WTC11 (cell line): ENCODE measurements at regions of chr19 and their contacts with region 1.

Region 1: GRCh38 chr19:9934132-9934950 is 2.0 kb downstream of the OLFM2 start:
- DNase-seq: peak; percentile 96
- ATAC-seq: peak; percentile 71
- H3K4me3 Mint-ChIP-seq: peak overlapping the region; percentile 91
- H3K27ac Mint-ChIP-seq: peak overlapping the region; percentile 97
- H3K4me1 Mint-ChIP-seq: peaks cover 24% of the 10 kb centered on the region
- H3K27me3 Mint-ChIP-seq: no peaks in the 10 kb centered on the region
- CTCF ChIP-seq: peak; percentile 96

Region 2: GRCh38 chr19:8487137-8487851 is 1447.0 kb before region 1 on chr19:
- CTCF ChIA-PET with region 1: no interaction called
- POLR2A ChIA-PET with region 1: no interaction called
- DNase-seq: no peak
- ATAC-seq: no peak
- H3K4me3 Mint-ChIP-seq: no peak overlapping the region
- H3K27ac Mint-ChIP-seq: peak overlapping the region; percentile 73
- H3K4me1 Mint-ChIP-seq: peaks cover 5% of the 10 kb centered on the region; the same call in 1 of the 2 replicates
- H3K27me3 Mint-ChIP-seq: no peaks in the 10 kb centered on the region
- CTCF ChIP-seq: no peak

Region 3: DNA sequence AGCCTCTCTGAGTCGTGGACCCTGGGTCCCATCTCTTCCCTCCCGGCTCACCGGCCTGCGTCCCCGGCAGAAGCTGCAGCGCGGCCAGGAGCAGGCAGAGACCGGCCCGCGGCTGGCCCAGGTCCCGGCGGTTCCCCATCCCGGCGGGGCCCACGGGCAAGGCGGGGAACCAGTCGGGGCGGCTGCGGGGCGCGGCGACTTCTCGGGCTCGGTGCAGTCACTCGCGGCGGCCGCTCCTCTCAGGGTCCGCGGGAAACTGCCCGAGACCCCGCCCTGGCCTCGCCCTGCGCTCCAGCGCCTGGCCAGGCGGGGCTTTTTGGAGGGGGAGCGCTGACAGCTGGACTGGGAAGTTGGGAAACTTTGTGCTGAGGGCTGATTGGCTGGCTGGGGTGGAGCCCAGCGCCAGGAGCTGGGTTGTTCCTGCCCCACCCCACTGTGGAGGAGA is 75.9 kb after region 1 on chr19 and contains the start of gene COL5A3:
- CTCF ChIA-PET with region 1: interaction called, 12 read pairs
- POLR2A ChIA-PET with region 1: no interaction called
- DNase-seq: peak; percentile 49
- ATAC-seq: peak; percentile 76
- H3K4me3 Mint-ChIP-seq: peak within 1 kb of the TSS; percentile 61
- H3K27ac Mint-ChIP-seq: no peak within 1 kb of the TSS
- H3K4me1 Mint-ChIP-seq: peaks cover 10% of the 10 kb centered on the region
- H3K27me3 Mint-ChIP-seq: peaks cover 63% of the 10 kb centered on the region
- CTCF ChIP-seq: no peak
- total RNA-seq, gene COL5A3: 0.81 to 1.2 TPM (median 0.96 TPM) in 3 replicates

Region 4: DNA sequence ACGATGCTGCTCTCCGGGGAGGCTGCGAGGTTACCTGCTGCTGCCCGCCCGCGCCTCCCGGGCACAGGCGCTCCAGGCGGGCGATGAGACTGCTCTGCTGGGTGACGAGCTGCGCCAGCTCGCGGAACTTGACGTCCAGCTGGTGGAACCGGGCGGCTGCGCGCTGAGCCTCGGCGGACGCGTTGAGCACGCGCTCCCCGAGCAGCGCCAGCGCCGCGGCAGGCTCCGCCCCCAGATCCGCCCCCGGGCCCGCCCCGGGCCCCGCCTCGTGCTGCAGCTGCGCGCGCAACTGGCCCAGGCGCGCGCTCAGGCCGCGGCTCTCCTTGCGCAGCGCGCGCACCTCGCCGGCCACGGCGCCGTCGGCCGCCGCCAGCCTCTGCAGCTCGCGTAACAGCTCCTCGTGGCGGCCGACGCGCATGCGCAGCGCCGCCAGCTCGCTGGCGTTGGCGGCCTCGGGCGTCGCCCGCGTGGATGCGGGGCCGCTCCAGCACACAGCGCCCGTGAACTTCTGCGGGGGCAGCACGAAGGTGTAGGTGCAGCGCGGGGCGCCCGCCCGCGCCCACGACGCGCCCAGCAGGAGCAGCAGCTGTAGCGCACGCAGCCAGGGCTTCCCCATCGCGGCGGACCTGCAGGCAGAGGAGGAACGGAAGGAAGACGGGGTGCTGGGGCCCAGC is 161.7 kb after region 1 on chr19:
- CTCF ChIA-PET with region 1: interaction called, 15 read pairs
- POLR2A ChIA-PET with region 1: no interaction called
- DNase-seq: peak; percentile 87
- ATAC-seq: peak; percentile 87
- H3K4me3 Mint-ChIP-seq: peak overlapping the region; percentile 42
- H3K27ac Mint-ChIP-seq: no peak overlapping the region
- H3K4me1 Mint-ChIP-seq: peaks cover 2% of the 10 kb centered on the region; the same call in 1 of the 2 replicates
- H3K27me3 Mint-ChIP-seq: peaks cover 62% of the 10 kb centered on the region
- CTCF ChIP-seq: no peak

Region 5: DNA sequence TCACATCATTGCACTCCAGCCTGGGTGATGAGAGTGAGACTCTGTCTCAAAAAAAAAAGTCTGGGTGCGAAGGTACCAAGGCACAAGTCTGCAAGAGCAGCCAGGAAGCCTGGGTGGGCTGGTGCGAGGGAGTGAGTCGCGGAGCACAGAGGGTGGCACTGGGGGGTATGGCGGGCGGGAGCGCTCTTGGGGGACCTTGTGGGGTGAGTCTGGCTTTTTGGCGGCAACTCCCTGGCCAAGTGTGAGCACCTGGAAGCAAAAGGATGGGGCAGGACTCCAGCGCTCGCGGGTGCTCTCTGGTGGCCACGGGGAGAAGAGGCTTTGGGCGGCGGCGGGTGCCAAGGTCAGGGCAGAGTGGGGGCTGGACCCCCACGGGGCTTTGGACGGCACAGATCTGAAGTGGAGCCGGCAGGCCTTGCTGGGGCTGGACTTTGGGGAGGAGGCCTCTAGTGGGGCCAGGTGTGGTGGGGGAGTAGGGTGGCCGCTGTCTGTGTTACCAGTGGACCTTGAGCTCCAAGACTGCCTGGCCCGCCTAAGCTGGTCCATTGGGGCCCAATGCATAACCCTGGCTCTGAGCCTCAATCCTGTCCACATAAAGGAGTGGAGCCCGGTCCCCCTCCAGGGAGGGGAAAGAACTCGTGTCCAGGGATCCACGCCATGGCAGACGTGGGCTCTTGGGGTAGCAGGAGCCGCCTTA is 178.7 kb after region 1 on chr19:
- CTCF ChIA-PET with region 1: interaction called, 21 read pairs
- POLR2A ChIA-PET with region 1: no interaction called
- DNase-seq: peak; percentile 86
- ATAC-seq: peak; percentile 58
- H3K4me3 Mint-ChIP-seq: no peak overlapping the region
- H3K27ac Mint-ChIP-seq: no peak overlapping the region
- H3K4me1 Mint-ChIP-seq: peaks cover 7% of the 10 kb centered on the region; the same call in 1 of the 2 replicates
- H3K27me3 Mint-ChIP-seq: no peaks in the 10 kb centered on the region
- CTCF ChIP-seq: peak; percentile 55